GM12878 (cell line): ENCODE measurements at regions of chr13 and their contacts with region 1.

Region 1: GRCh38 chr13:98565726-98566565 is 11.0 kb downstream of the STK24 start:
- DNase-seq: no peak
- ATAC-seq: 0 out of 3 replicates have a peak, but pooled peaks have one; percentile 2
- H3K4me3 ChIP-seq: peak overlapping the region; percentile 34
- H3K27ac ChIP-seq: peak overlapping the region; percentile 14
- H3K4me1 ChIP-seq: peaks cover 62% of the 10 kb centered on the region
- H3K27me3 ChIP-seq: no peaks in the 10 kb centered on the region
- CTCF ChIP-seq: no peak
- EP300 ChIP-seq: no peak
- POLR2A ChIP-seq: 0 out of 2 replicates have a peak, but pooled peaks have one; percentile 23
- RAD21 ChIP-seq: no peak

Region 2: DNA sequence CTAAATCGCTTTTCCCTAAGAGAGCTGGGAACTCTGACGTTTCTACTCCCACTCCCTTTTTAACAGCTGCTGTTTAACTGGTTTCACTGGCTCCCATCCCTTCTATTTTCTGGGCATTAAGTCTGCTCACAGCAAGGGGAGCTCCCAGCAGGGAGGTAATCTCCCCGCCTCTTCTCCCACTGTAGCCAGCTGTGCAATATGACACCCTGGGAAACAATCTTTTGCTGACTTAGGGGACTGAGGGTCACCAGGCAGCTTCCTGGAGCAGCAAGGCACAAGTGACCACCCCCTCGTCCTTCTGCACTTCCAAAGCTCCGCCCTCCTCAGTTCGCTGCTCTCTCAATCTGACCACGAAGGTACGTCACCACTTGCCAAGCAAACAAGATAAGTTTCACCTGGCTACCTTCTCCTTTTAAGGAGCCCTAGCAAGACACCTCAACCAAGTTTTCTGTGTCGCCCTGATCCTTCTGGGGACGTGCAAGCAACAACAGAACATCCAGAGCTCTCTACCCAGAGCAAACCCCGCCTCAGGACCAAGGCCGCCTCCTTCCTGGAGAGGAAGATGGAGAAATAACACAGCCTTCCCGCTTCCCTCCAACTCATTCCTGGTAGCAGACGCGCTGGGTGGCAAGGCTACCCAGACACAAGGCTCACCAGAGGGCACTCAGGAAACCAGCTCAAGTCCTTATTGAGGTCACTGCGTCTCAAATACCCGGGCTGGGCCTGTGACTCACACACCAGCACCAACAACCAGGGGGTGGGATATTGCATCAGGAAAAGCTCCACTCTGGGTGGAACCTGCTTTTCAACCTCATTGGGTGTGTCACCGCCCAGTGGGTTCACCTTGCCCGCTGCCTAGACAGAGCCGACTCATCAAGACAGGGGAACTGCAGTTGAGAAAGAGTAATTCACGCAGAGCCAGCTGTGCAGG is 81.4 kb before region 1 on chr13:
- CTCF ChIA-PET with region 1: interaction called, 6 read pairs
- POLR2A ChIA-PET with region 1: interaction called, 10 read pairs
- RAD21 ChIA-PET with region 1: interaction called, 10 read pairs
- SMC1A ChIA-PET with region 1: interaction called, 12 read pairs
- in situ Hi-C with region 1: no loop called
- intact Hi-C with region 1: no loop called
- DNase-seq: no peak
- ATAC-seq: peak; percentile 70
- H3K4me3 ChIP-seq: no peak overlapping the region
- H3K27ac ChIP-seq: peak overlapping the region; percentile 79
- H3K4me1 ChIP-seq: peaks cover 81% of the 10 kb centered on the region
- H3K27me3 ChIP-seq: no peaks in the 10 kb centered on the region
- CTCF ChIP-seq: no peak
- EP300 ChIP-seq: no peak
- POLR2A ChIP-seq: no peak
- RAD21 ChIP-seq: no peak

Region 3: DNA sequence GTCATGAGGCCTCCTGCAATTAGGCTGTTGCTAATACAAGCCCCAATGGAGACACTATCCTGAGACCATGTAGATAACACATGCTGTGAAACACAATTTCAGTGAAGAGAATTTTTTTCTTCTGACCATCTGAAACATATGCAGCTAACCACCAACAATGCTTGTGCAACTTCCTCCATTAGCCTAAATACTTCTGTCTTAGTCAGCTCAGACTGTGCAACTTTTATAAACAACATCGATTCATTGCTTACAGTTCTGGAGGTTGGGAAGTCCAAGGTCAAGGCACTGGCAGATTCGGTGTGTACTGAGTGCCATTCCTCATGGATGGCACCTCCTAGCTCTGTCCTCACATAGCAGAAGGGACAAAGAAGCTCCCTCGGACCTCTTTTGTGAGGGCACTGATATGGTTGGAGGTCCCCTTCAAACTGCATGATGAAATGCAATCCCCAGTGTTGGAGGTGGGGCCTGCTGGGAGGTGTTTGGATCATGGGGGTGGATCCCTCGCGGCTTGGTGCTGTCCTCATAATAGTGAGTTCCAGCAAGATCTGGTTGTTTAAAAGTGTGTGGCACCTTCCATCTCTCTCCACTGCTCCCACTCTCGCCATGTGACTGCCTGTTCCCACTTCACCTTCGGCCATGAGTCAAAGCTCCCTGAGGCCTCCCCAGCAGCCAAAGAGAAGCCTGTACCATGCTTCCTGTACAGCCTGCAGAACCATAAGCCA is 16.8 kb before region 1 on chr13:
- CTCF ChIA-PET with region 1: interaction called, 5 read pairs
- POLR2A ChIA-PET with region 1: interaction called, 9 read pairs
- RAD21 ChIA-PET with region 1: interaction called, 10 read pairs
- SMC1A ChIA-PET with region 1: interaction called, 12 read pairs
- in situ Hi-C with region 1: no loop called
- intact Hi-C with region 1: no loop called
- DNase-seq: no peak
- ATAC-seq: peak; percentile 44
- H3K4me3 ChIP-seq: no peak overlapping the region
- H3K27ac ChIP-seq: no peak overlapping the region; the same call in none of the 2 replicates
- H3K4me1 ChIP-seq: peaks cover 29% of the 10 kb centered on the region
- H3K27me3 ChIP-seq: no peaks in the 10 kb centered on the region
- CTCF ChIP-seq: no peak
- EP300 ChIP-seq: no peak
- POLR2A ChIP-seq: no peak
- RAD21 ChIP-seq: no peak